Heart right ventricle (tissue), 16 donors: ENCODE measurements at regions of chr7 and their contacts with region 1.

Region 1: GRCh38 chr7:93890464-93891068 is at the start of gene TFPI2:
- DNase-seq: peak; percentile 15 to 47
- ATAC-seq: peak; percentile 62 to 85 (median 79)
- H3K4me3 ChIP-seq: peak within 1 kb of the TSS; percentile 41 to 68 (median 62)
- H3K27ac ChIP-seq: peak within 1 kb of the TSS in 9 of 10 donors; percentile 13 to 66 (median 46)
- H3K4me1 ChIP-seq: peaks cover 0 to 26% (median 11%) of the 10 kb centered on the region in 9 donors
- H3K27me3 ChIP-seq: peaks cover 0 to 33% (median 9%) of the 10 kb centered on the region in 7 donors
- CTCF ChIP-seq: peak in 3 of 9 donors; percentile 18 to 41 (median 24)
- total RNA-seq, gene TFPI2: 1.1 to 13.4 (median 2.2) TPM

Region 2: DNA sequence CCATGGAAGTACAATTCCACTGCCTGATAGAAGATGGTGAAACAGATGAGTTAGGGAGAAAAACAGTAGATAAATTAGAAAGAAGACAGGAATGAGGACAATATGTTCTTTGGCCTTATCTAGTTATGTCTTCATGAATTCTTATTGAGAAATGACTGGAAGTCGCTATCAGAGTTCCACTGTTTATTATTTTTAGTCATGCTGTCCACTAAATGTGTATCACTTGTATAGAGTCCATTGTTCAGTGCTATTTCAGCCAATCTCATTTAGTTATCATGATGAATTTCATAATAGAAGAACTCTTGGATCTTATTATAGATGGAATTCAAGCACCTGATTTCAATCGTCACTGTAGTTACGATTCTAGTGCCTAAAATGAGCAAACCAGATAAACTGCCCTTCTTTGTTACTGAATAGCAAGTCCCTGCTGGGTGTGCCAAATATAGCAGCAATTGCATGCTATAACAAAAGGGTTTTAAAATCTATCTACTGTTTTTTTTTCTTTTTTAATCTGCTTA is 326.4 kb after region 1 on chr7:
- intact Hi-C with region 1: loop called in 1 of 10 experiments (anchors 10 kb)
- DNase-seq: no peak
- ATAC-seq: peak in 1 of 8 donors; percentile 55
- H3K4me3 ChIP-seq: no peak overlapping the region
- H3K27ac ChIP-seq: no peak overlapping the region
- H3K4me1 ChIP-seq: peaks cover 0 to 5% (median 0%) of the 10 kb centered on the region in 9 donors
- H3K27me3 ChIP-seq: no peaks in the 10 kb centered on the region
- CTCF ChIP-seq: no peak